WTC11 (cell line): ENCODE measurements at regions of chr4 and their contacts with region 1.

Region 1: GRCh38 chr4:114694770-114695169 is 96.2 kb downstream of the UGT8 start:
- DNase-seq: no peak
- ATAC-seq: no peak
- H3K4me3 Mint-ChIP-seq: no peak overlapping the region
- H3K27ac Mint-ChIP-seq: no peak overlapping the region
- H3K4me1 Mint-ChIP-seq: no peaks in the 10 kb centered on the region
- H3K27me3 Mint-ChIP-seq: no peaks in the 10 kb centered on the region
- CTCF ChIP-seq: peak; percentile 48; the same call in 1 of the 2 replicates

Region 2: GRCh38 chr4:114389070-114389685 is 305.6 kb before region 1 on chr4:
- CTCF ChIA-PET with region 1: interaction called, 20 read pairs
- POLR2A ChIA-PET with region 1: interaction called, 3 read pairs
- DNase-seq: no peak
- ATAC-seq: peak; percentile 49
- H3K4me3 Mint-ChIP-seq: no peak overlapping the region
- H3K27ac Mint-ChIP-seq: peak overlapping the region; percentile 26; the same call in 1 of the 2 replicates
- H3K4me1 Mint-ChIP-seq: peaks cover 25% of the 10 kb centered on the region
- H3K27me3 Mint-ChIP-seq: no peaks in the 10 kb centered on the region
- CTCF ChIP-seq: no peak

Region 3: DNA sequence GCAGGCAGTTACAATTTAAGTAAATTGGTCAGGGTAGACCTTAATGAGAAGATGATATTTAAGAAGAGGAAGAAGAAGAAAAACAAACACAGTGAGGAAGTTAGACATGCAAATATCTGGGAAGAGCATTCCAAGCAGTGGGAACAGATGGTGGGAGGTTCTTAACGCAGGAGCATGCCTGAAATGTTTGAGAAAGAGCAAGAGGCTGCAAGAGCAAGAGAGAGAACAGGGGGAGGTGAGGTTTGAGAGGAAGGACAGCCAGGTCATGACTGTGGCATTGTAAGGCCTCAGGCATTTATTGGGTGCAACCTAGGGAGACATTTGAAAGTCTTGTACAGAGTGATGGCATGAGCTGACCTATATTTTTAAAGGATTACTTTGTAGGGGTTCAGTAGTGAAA is 39.8 kb after region 1 on chr4:
- CTCF ChIA-PET with region 1: no interaction called
- POLR2A ChIA-PET with region 1: no interaction called
- DNase-seq: no peak
- ATAC-seq: peak; percentile 99
- H3K4me3 Mint-ChIP-seq: no peak overlapping the region
- H3K27ac Mint-ChIP-seq: peak overlapping the region; percentile 89
- H3K4me1 Mint-ChIP-seq: peaks cover 14% of the 10 kb centered on the region
- H3K27me3 Mint-ChIP-seq: no peaks in the 10 kb centered on the region
- CTCF ChIP-seq: no peak